GM10248 (cell line): ENCODE measurements at regions of chr18 and their contacts with region 1.

Region 1: GRCh38 chr18:52394602-52395001 is 54.6 kb downstream of the DCC start:
- DNase-seq: no peak
- CTCF ChIP-seq: no peak

Region 2: GRCh38 chr18:51857989-51858388 is 536.6 kb before region 1 on chr18:
- CTCF ChIA-PET with region 1: no interaction called
- POLR2A ChIA-PET with region 1: no interaction called
- DNase-seq: no peak
- CTCF ChIP-seq: no peak

Region 3: GRCh38 chr18:52376104-52376503 is 18.5 kb before region 1 on chr18:
- CTCF ChIA-PET with region 1: no interaction called
- POLR2A ChIA-PET with region 1: no interaction called
- DNase-seq: no peak
- CTCF ChIP-seq: no peak

Region 4: GRCh38 chr18:52409727-52410126 is 15.1 kb after region 1 on chr18:
- CTCF ChIA-PET with region 1: interaction called, 10 read pairs
- POLR2A ChIA-PET with region 1: no interaction called
- DNase-seq: peak; percentile 14
- CTCF ChIP-seq: peak; percentile 36

Region 5: GRCh38 chr18:52426462-52426861 is 31.9 kb after region 1 on chr18:
- CTCF ChIA-PET with region 1: no interaction called
- POLR2A ChIA-PET with region 1: no interaction called
- DNase-seq: no peak
- CTCF ChIP-seq: no peak